ENCODE measurements at regions of chr4 and their contacts with region 1.

Region 1: DNA sequence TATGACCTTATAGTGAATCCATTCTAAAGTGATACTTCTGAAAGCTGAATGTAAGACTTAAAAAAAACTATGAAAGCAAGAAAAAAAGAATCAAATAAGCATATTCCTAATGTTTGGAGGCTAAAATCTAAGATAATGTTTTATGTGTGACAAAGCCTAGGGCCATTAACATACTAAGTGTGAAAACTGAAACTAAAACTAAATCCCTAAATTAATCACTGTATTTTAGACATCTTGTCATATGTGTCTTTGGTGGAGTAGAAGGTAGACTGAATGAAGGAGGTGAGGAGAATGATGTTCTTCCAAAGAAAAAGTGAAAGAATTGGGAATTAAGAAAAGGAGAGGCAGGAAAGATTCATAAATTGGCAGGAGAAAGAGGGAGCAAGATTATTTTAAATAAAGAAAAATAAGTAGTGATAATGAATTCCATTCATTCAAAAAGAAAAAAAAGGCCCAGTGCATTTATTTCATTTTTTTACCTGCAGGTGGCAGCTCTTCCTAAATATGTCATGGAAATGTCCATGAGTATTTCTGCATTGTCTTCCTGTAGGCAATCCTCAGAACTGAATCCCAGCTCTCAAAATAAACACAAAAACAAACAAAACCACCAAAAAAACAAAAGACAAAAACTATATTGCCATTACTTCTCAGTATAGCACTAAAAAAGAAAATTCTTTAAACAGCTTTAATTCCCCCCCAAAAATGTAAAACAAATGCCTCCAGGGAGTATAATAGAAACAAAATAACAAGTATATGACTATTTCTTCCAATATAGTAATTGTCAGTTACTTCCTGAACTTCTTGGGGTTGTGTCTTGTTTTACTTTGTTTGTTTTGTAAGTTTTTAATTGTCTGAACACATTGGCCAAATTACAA is 17.0 kb upstream of the AP1AR start:
- DNase-seq: peak; percentile 34
- H3K4me3 ChIP-seq: no peak overlapping the region
- H3K27ac ChIP-seq: no peak overlapping the region
- H3K4me1 ChIP-seq: no peaks in the 10 kb centered on the region
- H3K27me3 ChIP-seq: no peaks in the 10 kb centered on the region
- CTCF ChIP-seq: peak in 1 of 2 donors; percentile 27
- POLR2A ChIP-seq: no peak

Region 2: GRCh38 chr4:111984169-111984819 is 230.3 kb before region 1 on chr4:
- CTCF ChIA-PET with region 1: no interaction called
- POLR2A ChIA-PET with region 1: no interaction called
- dilution Hi-C with region 1: no loop called
- intact Hi-C with region 1: no loop called
- DNase-seq: no peak
- H3K4me3 ChIP-seq: no peak overlapping the region
- H3K27ac ChIP-seq: no peak overlapping the region
- H3K4me1 ChIP-seq: no peaks in the 10 kb centered on the region
- H3K27me3 ChIP-seq: peaks cover 2 to 14% of the 10 kb centered on the region in 2 experiments
- CTCF ChIP-seq: no peak
- POLR2A ChIP-seq: no peak

Region 3: GRCh38 chr4:112196461-112196860 is 18.2 kb before region 1 on chr4:
- CTCF ChIA-PET with region 1: interaction called, 12 read pairs
- POLR2A ChIA-PET with region 1: no interaction called
- dilution Hi-C with region 1: no loop called
- intact Hi-C with region 1: no loop called
- DNase-seq: no peak
- H3K4me3 ChIP-seq: no peak overlapping the region
- H3K27ac ChIP-seq: no peak overlapping the region
- H3K4me1 ChIP-seq: peaks cover 3% of the 10 kb centered on the region
- H3K27me3 ChIP-seq: no peaks in the 10 kb centered on the region
- CTCF ChIP-seq: no peak
- POLR2A ChIP-seq: no peak

Region 4: DNA sequence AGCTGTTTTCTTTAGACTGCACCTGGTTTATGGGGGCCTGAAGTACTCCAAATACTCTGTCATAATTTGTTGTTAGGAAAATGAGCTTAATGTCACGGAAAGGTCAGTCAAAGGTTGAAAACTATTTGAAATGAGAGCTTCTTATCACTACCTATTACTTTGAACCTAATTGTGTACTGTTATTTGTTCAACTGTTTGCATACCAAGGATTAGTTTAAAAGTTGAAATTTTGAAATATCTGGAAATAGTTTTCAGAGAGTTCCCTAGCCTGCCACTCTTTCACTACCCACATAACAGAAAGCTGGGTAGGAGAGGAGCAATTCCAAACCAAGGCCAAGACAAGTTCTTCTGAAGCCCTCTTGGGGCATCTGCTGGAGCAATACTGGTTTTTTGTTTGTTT is 11.0 kb before region 1 on chr4:
- CTCF ChIA-PET with region 1: interaction called, 18 read pairs
- POLR2A ChIA-PET with region 1: no interaction called
- dilution Hi-C with region 1: no loop called
- intact Hi-C with region 1: no loop called
- DNase-seq: no peak
- H3K4me3 ChIP-seq: no peak overlapping the region
- H3K27ac ChIP-seq: no peak overlapping the region
- H3K4me1 ChIP-seq: peaks cover 3% of the 10 kb centered on the region
- H3K27me3 ChIP-seq: no peaks in the 10 kb centered on the region
- CTCF ChIP-seq: no peak
- POLR2A ChIP-seq: no peak